CD8-positive, alpha-beta memory T cell (primary cell): ENCODE measurements at regions of chr11 and their contacts with region 1.

Region 1: DNA sequence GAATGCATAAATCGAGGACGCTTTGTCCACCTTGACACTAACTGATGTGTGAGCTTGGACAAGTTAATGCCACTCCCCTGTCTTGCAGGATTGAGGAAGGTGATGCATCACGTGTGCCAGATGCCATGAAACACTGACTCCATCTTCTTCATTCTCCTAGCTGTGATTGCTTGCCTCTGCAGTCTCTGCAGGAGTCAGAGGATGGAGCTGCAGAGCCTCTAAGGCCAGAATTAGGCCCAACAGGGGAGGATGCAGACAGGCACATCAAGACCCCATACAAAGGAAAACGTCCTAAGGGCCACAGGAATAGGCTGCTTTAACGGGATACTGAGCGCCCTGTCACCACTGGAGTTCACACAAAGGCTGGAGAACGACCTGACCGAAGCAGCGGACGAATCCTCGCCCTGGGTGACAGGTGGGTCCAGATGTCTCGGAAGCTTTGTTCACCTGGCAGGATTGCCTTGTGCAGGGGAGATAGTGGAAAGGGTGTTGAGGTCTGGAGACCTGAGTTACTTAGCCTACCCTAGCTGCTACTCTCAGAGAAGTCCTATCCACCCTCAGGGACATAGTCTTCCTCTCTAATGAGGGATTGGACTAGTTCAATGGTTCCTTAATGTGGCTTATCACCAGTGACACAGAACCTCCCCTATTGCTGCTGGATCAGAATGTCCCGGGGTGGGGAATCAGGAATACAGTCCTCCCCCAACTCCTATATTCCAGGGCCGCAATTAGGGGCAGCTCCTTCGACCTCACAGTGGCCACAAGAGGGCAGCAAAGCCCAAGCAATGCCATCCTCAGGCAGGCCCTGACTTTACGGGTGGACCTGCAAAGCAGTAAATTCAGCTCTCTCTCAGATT is 32.4 kb downstream of the DBX1 start:
- DNase-seq: peak; percentile 42 to 79 (median 56)
- H3K4me3 ChIP-seq: no peak overlapping the region
- H3K4me3 Mint-ChIP-seq: no peak overlapping the region
- H3K27ac ChIP-seq: no peak overlapping the region
- H3K27ac Mint-ChIP-seq: no peak overlapping the region
- H3K4me1 ChIP-seq: no peaks in the 10 kb centered on the region
- H3K4me1 Mint-ChIP-seq: peaks cover 10 to 13% (median 12%) of the 10 kb centered on the region in 3 donors
- H3K27me3 ChIP-seq: peaks cover 6% of the 10 kb centered on the region
- H3K27me3 Mint-ChIP-seq: peaks cover 10 to 12% of the 10 kb centered on the region in 2 donors

Region 2: GRCh38 chr11:20193307-20193706 is 65.4 kb after region 1 on chr11:
- CTCF ChIA-PET with region 1: no interaction called
- POLR2A ChIA-PET with region 1: no interaction called
- DNase-seq: no peak
- H3K4me3 ChIP-seq: no peak overlapping the region
- H3K4me3 Mint-ChIP-seq: no peak overlapping the region
- H3K27ac ChIP-seq: no peak overlapping the region
- H3K27ac Mint-ChIP-seq: no peak overlapping the region
- H3K4me1 ChIP-seq: no peaks in the 10 kb centered on the region
- H3K4me1 Mint-ChIP-seq: no peaks in the 10 kb centered on the region
- H3K27me3 ChIP-seq: no peaks in the 10 kb centered on the region
- H3K27me3 Mint-ChIP-seq: peaks cover 4 to 28% of the 10 kb centered on the region in 2 donors

Region 3: DNA sequence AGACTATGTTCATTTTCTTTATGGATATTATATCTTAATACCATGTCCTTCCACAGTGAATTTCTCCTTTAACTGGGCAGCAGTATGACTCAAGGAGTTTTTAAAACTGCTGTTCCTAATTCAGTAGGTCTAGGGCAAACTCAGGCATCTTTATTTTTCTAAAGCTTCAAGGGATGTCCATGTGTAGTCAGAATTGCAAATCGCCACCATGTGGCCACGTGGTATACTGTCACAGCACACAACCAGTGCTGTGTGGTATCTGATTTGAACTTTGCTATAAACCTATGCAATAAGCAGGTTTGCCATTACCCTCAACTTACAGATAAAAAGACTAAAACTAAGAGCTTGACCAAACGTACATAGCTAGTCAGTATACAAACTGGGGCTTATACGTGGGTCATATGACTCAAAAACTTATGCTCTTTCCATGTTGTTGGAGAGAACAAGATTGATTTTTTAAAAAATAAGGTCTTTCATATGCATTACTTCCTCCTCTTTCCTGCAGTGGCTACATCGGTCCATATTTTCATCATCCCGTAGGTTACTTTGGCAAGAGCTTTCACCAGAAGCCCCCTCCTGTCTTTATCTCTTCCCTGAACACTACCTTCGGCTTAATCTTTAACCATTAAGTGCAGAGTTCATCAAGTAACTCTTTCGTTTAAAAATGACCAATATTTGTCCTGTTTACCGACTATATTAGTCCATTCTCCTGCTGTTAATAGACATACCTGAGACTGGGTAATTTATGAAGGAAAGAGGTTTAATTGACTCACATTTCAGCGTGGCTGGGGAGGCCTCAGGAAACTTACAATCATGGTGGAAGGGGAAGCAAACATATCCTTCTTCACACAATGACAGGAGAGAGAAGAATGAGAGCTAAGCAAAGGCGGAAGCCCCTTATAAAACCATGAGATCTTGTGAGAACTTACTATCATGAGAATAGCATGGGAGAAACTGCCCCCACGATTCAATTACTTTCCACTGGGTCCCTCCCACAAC is 227.6 kb after region 1 on chr11:
- CTCF ChIA-PET with region 1: interaction called, 61 read pairs
- POLR2A ChIA-PET with region 1: no interaction called
- DNase-seq: peak in 3 of 5 donors; percentile 12 to 52 (median 21)
- H3K4me3 ChIP-seq: no peak overlapping the region
- H3K4me3 Mint-ChIP-seq: no peak overlapping the region
- H3K27ac ChIP-seq: no peak overlapping the region
- H3K27ac Mint-ChIP-seq: no peak overlapping the region
- H3K4me1 ChIP-seq: peaks cover 7% of the 10 kb centered on the region
- H3K4me1 Mint-ChIP-seq: peaks cover 4 to 18% (median 9%) of the 10 kb centered on the region in 3 donors
- H3K27me3 ChIP-seq: no peaks in the 10 kb centered on the region
- H3K27me3 Mint-ChIP-seq: peaks cover 0 to 5% of the 10 kb centered on the region in 2 donors

Region 4: DNA sequence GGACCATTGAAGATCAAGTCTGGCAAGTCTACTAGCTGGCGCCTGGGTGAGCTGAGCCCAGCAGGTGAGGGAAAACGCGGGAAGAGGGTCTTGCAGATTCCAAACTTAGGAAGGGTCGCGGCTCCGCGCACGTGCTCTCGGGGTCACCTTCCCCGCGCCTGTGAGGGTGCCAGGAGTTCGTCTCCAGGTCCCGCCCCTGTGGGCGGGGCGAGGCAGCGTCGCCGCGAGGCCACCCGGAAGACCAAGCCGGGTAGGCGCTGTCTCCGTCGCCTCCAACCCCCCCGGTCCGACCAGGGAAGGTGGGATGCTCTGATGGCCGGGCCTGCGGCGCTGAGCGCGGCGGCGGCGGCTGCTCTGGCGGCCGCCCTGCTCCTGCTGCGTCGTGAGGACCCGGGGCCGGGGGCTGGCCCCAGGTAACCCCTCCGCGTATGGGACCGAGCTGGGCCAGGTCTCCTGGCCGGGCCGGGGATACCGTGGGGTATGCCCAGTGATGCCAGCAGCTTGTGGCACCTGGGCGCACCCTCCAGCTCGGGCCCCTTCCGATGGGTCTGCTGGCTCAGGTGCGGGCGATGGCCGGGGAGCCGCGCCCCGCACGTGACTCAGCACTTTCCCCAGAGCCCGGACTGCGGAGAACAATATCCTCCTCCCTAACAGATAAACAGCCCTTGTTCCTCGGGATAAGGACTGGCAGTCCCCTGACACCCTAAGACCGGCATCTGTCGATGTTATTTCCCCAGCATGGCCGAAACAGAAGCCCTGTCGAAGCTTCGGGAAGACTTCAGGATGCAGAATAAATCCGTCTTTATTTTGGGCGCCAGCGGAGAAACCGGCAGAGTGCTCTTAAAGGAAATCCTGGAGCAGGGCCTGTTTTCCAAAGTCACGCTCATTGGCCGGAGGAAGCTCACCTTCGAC is 235.9 kb after region 1 on chr11 and contains the start of gene HTATIP2:
- CTCF ChIA-PET with region 1: interaction called, 13 read pairs
- POLR2A ChIA-PET with region 1: no interaction called
- DNase-seq: peak; percentile 72 to 87 (median 77)
- H3K4me3 ChIP-seq: peak within 1 kb of the TSS; percentile 78
- H3K4me3 Mint-ChIP-seq: peak within 1 kb of the TSS; percentile 86 to 97 (median 94)
- H3K27ac ChIP-seq: peak within 1 kb of the TSS; percentile 83
- H3K27ac Mint-ChIP-seq: peak within 1 kb of the TSS; percentile 88 to 96 (median 94)
- H3K4me1 ChIP-seq: peaks cover 45% of the 10 kb centered on the region
- H3K4me1 Mint-ChIP-seq: peaks cover 57 to 78% (median 69%) of the 10 kb centered on the region in 3 donors
- H3K27me3 ChIP-seq: no peaks in the 10 kb centered on the region
- H3K27me3 Mint-ChIP-seq: no peaks in the 10 kb centered on the region
- total RNA-seq, gene HTATIP2: 50.7 to 52.4 TPM